Activated CD4-positive, alpha-beta memory T cell treated with anti-CD3 and anti-CD28 coated beads for 36 hours (primary cell): ENCODE measurements at regions of chr11 and their contacts with region 1.

Region 1: DNA sequence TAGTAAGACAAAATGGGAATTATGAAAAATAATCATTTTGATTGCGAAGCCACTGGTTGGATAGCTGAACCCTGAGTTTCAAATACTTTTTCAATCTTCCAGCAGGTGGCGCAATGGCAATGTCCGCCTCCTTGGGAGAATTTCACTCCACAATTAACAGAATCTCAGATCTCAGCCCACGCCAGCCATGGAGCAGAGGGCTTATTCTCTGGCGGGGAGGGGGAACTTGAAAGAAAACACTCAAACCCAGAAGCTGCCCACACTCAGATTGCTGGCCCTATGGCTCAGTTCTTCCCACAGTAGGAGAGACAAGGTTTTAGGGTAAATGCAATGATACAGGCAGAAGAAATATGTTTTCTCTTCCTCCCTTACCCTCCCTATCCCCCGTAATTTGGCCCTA is 38.7 kb upstream of the RCN1 start:
- DNase-seq: peak; percentile 60
- H3K4me3 Mint-ChIP-seq: no peak overlapping the region
- H3K27ac Mint-ChIP-seq: no peak overlapping the region
- H3K4me1 Mint-ChIP-seq: no peaks in the 10 kb centered on the region
- H3K27me3 Mint-ChIP-seq: peaks cover 34% of the 10 kb centered on the region

Region 2: DNA sequence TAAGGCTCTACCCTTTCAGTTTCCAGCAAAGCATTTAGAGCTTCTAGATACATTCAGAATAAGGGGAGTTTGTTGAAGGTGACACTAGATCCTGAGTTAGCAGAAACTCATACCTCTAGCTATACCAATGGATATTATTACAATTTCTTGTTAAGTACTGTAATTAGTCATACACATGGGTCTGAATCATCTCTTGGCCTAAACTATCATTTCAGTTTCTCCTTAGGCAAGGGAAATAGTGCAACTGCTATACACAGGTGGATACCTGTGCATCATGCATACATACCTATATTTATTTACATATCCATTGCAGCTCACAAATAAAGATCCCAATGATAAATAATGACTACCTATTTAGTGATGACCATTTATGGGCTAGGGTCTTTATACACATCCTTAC is 196.0 kb before region 1 on chr11:
- CTCF ChIA-PET with region 1: no interaction called
- POLR2A ChIA-PET with region 1: no interaction called
- intact Hi-C with region 1: no loop called
- DNase-seq: no peak
- H3K4me3 Mint-ChIP-seq: no peak overlapping the region
- H3K27ac Mint-ChIP-seq: no peak overlapping the region
- H3K4me1 Mint-ChIP-seq: no peaks in the 10 kb centered on the region
- H3K27me3 Mint-ChIP-seq: peaks cover 22% of the 10 kb centered on the region

Region 3: DNA sequence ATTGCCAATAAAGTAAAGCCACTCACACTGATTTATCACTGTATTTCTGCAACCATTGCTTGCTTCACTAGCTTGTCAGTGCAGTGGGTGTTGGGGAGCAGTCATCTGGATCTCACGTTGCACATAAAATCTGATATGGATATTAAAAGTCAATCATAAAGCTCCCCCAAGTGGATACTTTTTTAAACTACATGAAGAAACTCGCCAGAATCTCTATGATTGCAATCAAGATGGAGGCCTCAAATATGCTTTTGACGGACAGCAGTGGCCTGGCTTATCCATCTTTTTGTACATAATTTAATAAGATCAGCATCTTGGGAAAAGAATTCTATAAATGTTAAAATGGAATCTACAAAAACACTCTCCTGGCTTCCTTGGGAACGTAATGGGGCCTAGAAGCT is 245.4 kb after region 1 on chr11:
- CTCF ChIA-PET with region 1: interaction called, 7 read pairs
- POLR2A ChIA-PET with region 1: no interaction called
- intact Hi-C with region 1: loop called (anchors 1 kb)
- DNase-seq: no peak
- H3K4me3 Mint-ChIP-seq: no peak overlapping the region
- H3K27ac Mint-ChIP-seq: no peak overlapping the region
- H3K4me1 Mint-ChIP-seq: no peaks in the 10 kb centered on the region
- H3K27me3 Mint-ChIP-seq: no peaks in the 10 kb centered on the region